OCI-LY7 (cell line): ENCODE measurements at regions of chr13 and their contacts with region 1.

Region 1: DNA sequence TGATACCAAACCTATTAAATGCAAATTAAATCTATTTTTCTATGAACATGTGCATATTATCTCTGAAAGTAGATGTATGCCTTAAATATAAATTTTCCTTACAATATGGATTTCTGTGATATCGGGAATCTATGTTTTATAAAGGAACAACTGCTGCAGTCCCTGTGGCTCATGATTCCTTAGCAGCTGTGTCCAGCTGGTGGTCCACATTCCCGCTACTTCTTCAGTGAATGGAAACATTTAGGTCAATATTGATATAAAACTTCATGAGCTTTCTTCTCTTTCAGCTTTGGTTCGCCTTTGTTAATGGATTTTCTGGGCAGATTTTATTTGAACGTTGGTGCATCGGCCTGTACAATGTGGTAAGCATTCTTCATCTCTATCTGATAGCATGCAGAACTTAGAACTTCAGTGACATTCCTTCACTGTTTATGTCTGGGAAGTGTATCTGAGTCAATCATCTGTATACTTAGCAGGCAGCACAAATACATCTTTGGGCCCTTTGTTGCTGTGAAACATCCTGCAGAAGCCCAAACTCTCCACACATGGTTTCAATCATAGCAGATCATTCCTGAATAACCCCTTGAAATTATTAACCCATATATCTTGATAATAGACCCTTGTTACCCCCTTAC is 223.9 kb downstream of the SHISA2 start:
- DNase-seq: no peak
- H3K4me3 ChIP-seq: no peak overlapping the region
- H3K27ac ChIP-seq: no peak overlapping the region
- H3K4me1 ChIP-seq: no peaks in the 10 kb centered on the region
- CTCF ChIP-seq: no peak

Region 2: GRCh38 chr13:26062844-26063444 is 235.0 kb after region 1 on chr13:
- CTCF ChIA-PET with region 1: no interaction called
- POLR2A ChIA-PET with region 1: no interaction called
- intact Hi-C with region 1: loop called (anchors 5 kb)
- DNase-seq: peak; percentile 50
- H3K4me3 ChIP-seq: no peak overlapping the region
- H3K27ac ChIP-seq: no peak overlapping the region
- H3K4me1 ChIP-seq: no peaks in the 10 kb centered on the region
- CTCF ChIP-seq: peak; percentile 86